Ovary (tissue), 10 donors: ENCODE measurements at regions of chr7 and their contacts with region 1.

Region 1: GRCh38 chr7:90708841-90709317 is 112.8 kb downstream of the CDK14 start:
- DNase-seq: no peak
- H3K4me3 ChIP-seq: no peak overlapping the region
- H3K27ac ChIP-seq: no peak overlapping the region
- H3K4me1 ChIP-seq: peaks cover 14% of the 10 kb centered on the region
- H3K27me3 ChIP-seq: no peaks in the 10 kb centered on the region
- CTCF ChIP-seq: no peak
- EP300 ChIP-seq: no peak
- POLR2A ChIP-seq: no peak

Region 2: GRCh38 chr7:90595801-90596671 is 112.8 kb before region 1 on chr7 and contains the start of gene CDK14:
- intact Hi-C with region 1: loop called in 1 of 4 experiments (anchors 10 kb)
- DNase-seq: peak; percentile 81 to 90 (median 87)
- H3K4me3 ChIP-seq: peak within 1 kb of the TSS; percentile 92
- H3K27ac ChIP-seq: peak within 1 kb of the TSS; percentile 69 to 96
- H3K4me1 ChIP-seq: peaks cover 3% of the 10 kb centered on the region
- H3K27me3 ChIP-seq: no peaks in the 10 kb centered on the region
- CTCF ChIP-seq: peak; percentile 25 to 69 (median 69)
- EP300 ChIP-seq: no peak
- POLR2A ChIP-seq: peak; percentile 15
- total RNA-seq, gene CDK14: 27.9 to 54.1 (median 47.0) TPM